GM10248 (cell line): ENCODE measurements at regions of chr16 and their contacts with region 1.

Region 1: DNA sequence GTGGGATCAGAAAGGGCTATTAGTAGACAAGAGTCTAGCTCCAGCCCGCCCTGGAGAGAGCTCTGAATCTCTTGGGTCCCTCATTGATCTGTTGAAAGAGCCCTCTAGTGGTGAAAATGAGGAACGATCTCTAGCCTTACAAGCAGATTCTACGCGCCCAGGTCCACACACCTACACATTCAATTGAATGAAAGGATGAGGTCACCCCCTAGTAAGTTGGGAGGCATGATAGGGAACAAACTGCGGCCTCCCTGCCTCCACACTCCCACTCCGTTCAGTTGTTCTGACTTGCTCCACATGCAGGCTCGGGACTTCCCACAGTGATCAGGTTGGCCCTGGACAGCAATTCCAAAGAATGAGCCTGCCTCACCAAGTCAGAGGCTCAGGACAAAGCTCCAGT is 2.9 kb upstream of the CACNG3 start:
- DNase-seq: peak; percentile 71
- CTCF ChIP-seq: peak; percentile 79

Region 2: GRCh38 chr16:23803591-23804123 is 449.5 kb before region 1 on chr16:
- CTCF ChIA-PET with region 1: interaction called, 24 read pairs
- POLR2A ChIA-PET with region 1: no interaction called
- DNase-seq: peak; percentile 82
- CTCF ChIP-seq: peak; percentile 85

Region 3: DNA sequence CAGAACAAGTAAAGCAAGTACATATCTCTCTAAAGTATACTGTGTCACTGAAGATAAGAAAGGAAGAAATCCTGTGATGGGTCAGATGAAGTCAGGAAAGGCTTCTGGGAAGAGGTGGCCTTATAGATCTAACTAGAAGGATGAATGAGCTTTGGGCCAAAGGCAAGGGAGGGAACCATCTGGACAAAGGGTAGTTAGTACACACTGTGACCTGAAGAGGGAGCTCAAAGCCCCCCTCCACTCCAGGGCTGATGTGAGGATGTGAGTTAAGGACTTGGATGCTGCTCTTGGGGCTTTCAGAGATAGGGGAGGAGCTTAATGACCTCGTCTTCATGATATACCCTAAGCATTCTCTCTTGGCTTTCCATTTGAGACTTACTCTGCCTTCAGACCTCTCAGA is 182.3 kb before region 1 on chr16:
- CTCF ChIA-PET with region 1: interaction called, 28 read pairs
- POLR2A ChIA-PET with region 1: no interaction called
- DNase-seq: peak; percentile 65
- CTCF ChIP-seq: peak; percentile 39

Region 4: DNA sequence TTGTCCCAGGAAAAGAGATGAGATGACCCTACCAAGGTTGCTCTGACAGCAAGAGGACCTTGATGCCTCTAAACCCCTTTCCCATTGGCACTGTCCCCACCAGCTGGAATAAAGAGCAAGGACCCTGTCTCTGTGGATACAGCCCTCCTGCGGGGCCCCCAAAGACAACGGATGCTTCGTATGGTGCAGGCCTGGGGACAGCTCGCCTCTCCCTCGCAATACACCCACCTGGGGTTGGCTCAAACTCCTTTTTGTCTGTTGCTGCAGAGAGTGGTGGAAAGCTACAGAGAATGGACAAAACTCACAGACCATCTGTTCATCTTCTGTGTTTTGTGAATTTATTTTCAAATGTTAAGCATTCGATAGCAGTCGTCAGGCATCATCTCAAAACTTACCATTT is 24.7 kb before region 1 on chr16:
- CTCF ChIA-PET with region 1: interaction called, 15 read pairs
- POLR2A ChIA-PET with region 1: no interaction called
- DNase-seq: no peak
- CTCF ChIP-seq: no peak

Region 5: GRCh38 chr16:24273473-24274182 is 20.4 kb after region 1 on chr16:
- CTCF ChIA-PET with region 1: interaction called, 17 read pairs
- POLR2A ChIA-PET with region 1: no interaction called
- DNase-seq: no peak
- CTCF ChIP-seq: no peak